ENCODE measurements at regions of chr4 and their contacts with region 1.

Region 1: GRCh38 chr4:98260579-98261290 is 449 bp upstream of the RAP1GDS1 start:
- DNase-seq: peak; percentile 96 to 97
- H3K4me3 ChIP-seq: peak overlapping the region; percentile 50
- H3K4me3 Mint-ChIP-seq: peak overlapping the region; percentile 89
- H3K27ac Mint-ChIP-seq: peak overlapping the region; percentile 96
- H3K4me1 ChIP-seq: peaks cover 10% of the 10 kb centered on the region
- H3K4me1 Mint-ChIP-seq: peaks cover 20% of the 10 kb centered on the region
- H3K27me3 ChIP-seq: no peaks in the 10 kb centered on the region
- H3K27me3 Mint-ChIP-seq: no peaks in the 10 kb centered on the region
- CTCF ChIP-seq: peak in 1 of 2 experiments; percentile 0

Region 2: DNA sequence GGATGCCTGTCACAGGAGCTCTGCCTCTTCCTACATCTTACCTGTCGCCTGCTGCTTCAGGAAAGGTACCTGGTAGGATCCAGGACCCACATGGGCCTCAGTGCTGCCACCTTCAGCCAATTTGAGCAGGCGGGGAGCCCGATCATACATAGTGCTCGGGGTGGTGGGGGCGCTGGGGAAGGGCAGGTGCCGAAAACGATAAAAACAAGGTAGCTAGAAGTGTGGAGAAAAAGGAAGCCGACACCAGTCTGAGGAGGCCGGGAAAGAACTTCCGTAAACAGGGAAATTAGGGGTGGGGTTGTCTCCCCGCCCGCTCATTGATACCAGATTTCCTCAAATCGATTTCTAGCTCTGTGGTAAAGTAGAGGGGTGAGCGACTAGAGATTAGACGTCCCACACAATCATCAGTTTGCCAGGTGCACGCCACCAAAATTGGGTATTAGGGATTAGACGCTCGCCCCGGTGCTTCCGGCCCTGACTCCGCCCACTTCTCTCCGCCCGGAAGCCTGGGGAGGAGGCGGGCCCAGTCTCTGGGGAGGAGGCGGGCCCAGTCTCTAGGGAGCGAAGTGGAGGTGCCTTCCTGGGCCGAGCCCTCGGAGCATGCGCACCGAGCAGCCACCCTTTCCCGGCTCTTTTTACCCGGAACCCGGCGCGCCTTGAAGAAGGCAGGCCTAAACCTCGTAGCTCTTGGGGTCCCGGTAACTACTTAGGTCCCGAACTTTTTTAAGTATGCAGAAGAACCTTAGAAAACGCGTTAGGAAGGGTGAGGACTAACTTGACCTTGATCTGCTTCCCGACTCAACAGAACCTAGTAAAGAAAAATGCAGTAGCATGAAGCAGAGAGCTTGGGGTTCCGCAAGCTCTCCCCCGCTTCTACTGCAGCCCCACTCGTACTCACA is 117.5 kb before region 1 on chr4 and contains the start of gene STPG2:
- CTCF ChIA-PET with region 1: no interaction called
- POLR2A ChIA-PET with region 1: interaction called, 15 read pairs
- intact Hi-C with region 1: loop called (anchors 1 kb)
- DNase-seq: peak; percentile 94
- H3K4me3 ChIP-seq: peak within 1 kb of the TSS; percentile 48
- H3K4me3 Mint-ChIP-seq: peak within 1 kb of the TSS; percentile 96
- H3K27ac Mint-ChIP-seq: peak within 1 kb of the TSS; percentile 95
- H3K4me1 ChIP-seq: peaks cover 5% of the 10 kb centered on the region; the same call in 1 of the 2 replicates
- H3K4me1 Mint-ChIP-seq: peaks cover 16% of the 10 kb centered on the region
- H3K27me3 ChIP-seq: no peaks in the 10 kb centered on the region
- H3K27me3 Mint-ChIP-seq: peaks cover under 1% of the 10 kb centered on the region
- CTCF ChIP-seq: peak; percentile 50 to 76
- total RNA-seq, gene STPG2: not detected in 2 replicates

Region 3: GRCh38 chr4:98314791-98315565 is 54.2 kb after region 1 on chr4:
- CTCF ChIA-PET with region 1: no interaction called
- POLR2A ChIA-PET with region 1: no interaction called
- intact Hi-C with region 1: no loop called
- DNase-seq: no peak
- H3K4me3 ChIP-seq: no peak overlapping the region
- H3K4me3 Mint-ChIP-seq: no peak overlapping the region
- H3K27ac Mint-ChIP-seq: no peak overlapping the region
- H3K4me1 ChIP-seq: no peaks in the 10 kb centered on the region
- H3K4me1 Mint-ChIP-seq: no peaks in the 10 kb centered on the region
- H3K27me3 ChIP-seq: no peaks in the 10 kb centered on the region
- H3K27me3 Mint-ChIP-seq: no peaks in the 10 kb centered on the region
- CTCF ChIP-seq: no peak

Region 4: GRCh38 chr4:98332017-98332416 is 71.3 kb after region 1 on chr4:
- CTCF ChIA-PET with region 1: no interaction called
- POLR2A ChIA-PET with region 1: no interaction called
- intact Hi-C with region 1: loop called (anchors 5 kb)
- DNase-seq: no peak
- H3K4me3 ChIP-seq: no peak overlapping the region
- H3K4me3 Mint-ChIP-seq: no peak overlapping the region
- H3K27ac Mint-ChIP-seq: no peak overlapping the region
- H3K4me1 ChIP-seq: no peaks in the 10 kb centered on the region
- H3K4me1 Mint-ChIP-seq: no peaks in the 10 kb centered on the region
- H3K27me3 ChIP-seq: no peaks in the 10 kb centered on the region
- H3K27me3 Mint-ChIP-seq: no peaks in the 10 kb centered on the region
- CTCF ChIP-seq: no peak

Region 5: GRCh38 chr4:98383431-98384106 is 122.8 kb after region 1 on chr4:
- CTCF ChIA-PET with region 1: interaction called, 3 read pairs
- POLR2A ChIA-PET with region 1: no interaction called
- intact Hi-C with region 1: loop called (anchors 10 kb)
- DNase-seq: no peak
- H3K4me3 ChIP-seq: no peak overlapping the region
- H3K4me3 Mint-ChIP-seq: no peak overlapping the region
- H3K27ac Mint-ChIP-seq: no peak overlapping the region
- H3K4me1 ChIP-seq: no peaks in the 10 kb centered on the region
- H3K4me1 Mint-ChIP-seq: peaks cover 7% of the 10 kb centered on the region
- H3K27me3 ChIP-seq: no peaks in the 10 kb centered on the region
- H3K27me3 Mint-ChIP-seq: no peaks in the 10 kb centered on the region
- CTCF ChIP-seq: no peak